ENCODE measurements at regions of chr2 and their contacts with region 1.

Region 1: DNA sequence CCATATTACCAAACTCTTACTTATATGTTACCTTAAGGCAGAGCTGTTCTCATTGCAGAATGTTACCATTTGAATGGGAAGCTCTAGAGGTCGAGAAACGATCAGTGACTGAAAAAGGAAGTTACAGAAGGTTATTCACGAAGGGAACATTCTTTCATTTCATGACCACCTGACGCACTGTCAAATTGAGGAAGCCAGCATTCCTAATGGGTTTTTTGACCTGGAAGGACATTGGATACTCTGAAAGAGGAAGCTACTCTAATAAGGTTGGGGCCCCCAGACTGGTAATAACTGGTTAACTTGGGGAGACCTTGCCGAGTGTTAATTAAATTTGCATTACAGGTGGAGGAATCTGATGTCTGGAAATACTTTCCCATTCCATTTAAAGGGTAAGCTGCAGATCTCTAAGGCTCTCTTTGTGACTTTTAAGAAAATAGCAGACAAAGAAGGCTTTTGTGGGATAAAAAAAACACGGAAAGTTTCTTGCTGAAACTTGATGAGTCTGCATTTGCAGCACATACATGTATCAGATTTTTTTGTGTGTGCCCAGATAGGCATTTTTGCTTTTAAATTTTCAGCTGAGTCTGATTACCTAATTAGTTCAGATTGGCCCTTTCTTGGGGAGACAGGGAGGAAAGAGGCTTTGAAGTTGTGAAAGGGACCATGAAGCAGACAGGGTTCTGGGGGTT is 137.1 kb downstream of the LTBP1 start:
- DNase-seq: no peak

Region 2: GRCh38 chr2:33126958-33127357 is 43.1 kb after region 1 on chr2:
- intact Hi-C with region 1: loop called in 1 of 2 experiments (anchors 5 kb)
- DNase-seq: no peak

Region 3: GRCh38 chr2:33190393-33190937 is 106.6 kb after region 1 on chr2:
- intact Hi-C with region 1: no loop called
- DNase-seq: no peak

Measured in posterior vena cava (tissue), 2 donors.